Caco-2 (cell line): ENCODE measurements at regions of chr2 and their contacts with region 1.

Region 1: GRCh38 chr2:65227425-65228262 is at the start of gene ACTR2:
- DNase-seq: peak; percentile 98
- H3K4me3 ChIP-seq: peak within 1 kb of the TSS; percentile 84
- H3K4me3 Mint-ChIP-seq: peak within 1 kb of the TSS; percentile 77
- H3K27ac Mint-ChIP-seq: peak within 1 kb of the TSS; percentile 86
- H3K4me1 ChIP-seq: peaks cover 15% of the 10 kb centered on the region
- H3K4me1 Mint-ChIP-seq: peaks cover 22% of the 10 kb centered on the region
- H3K27me3 ChIP-seq: no peaks in the 10 kb centered on the region
- H3K27me3 Mint-ChIP-seq: no peaks in the 10 kb centered on the region
- CTCF ChIP-seq: no peak
- total RNA-seq, gene ACTR2: 248 and 259 TPM in 2 replicates

Region 2: GRCh38 chr2:64586883-64587481 is 640.7 kb before region 1 on chr2:
- CTCF ChIA-PET with region 1: no interaction called
- POLR2A ChIA-PET with region 1: interaction called, 11 read pairs
- intact Hi-C with region 1: no loop called
- DNase-seq: peak in 1 of 2 experiments; percentile 33
- H3K4me3 ChIP-seq: no peak overlapping the region
- H3K4me3 Mint-ChIP-seq: no peak overlapping the region
- H3K27ac Mint-ChIP-seq: no peak overlapping the region
- H3K4me1 ChIP-seq: no peaks in the 10 kb centered on the region
- H3K4me1 Mint-ChIP-seq: no peaks in the 10 kb centered on the region
- H3K27me3 ChIP-seq: no peaks in the 10 kb centered on the region
- H3K27me3 Mint-ChIP-seq: no peaks in the 10 kb centered on the region
- CTCF ChIP-seq: peak; percentile 48 to 63

Region 3: GRCh38 chr2:65056215-65057053 is 171.2 kb before region 1 on chr2 and contains the start of gene CEP68:
- CTCF ChIA-PET with region 1: interaction called, 3 read pairs
- POLR2A ChIA-PET with region 1: interaction called, 40 read pairs
- intact Hi-C with region 1: no loop called
- DNase-seq: peak; percentile 98 to 99
- H3K4me3 ChIP-seq: peak within 1 kb of the TSS; percentile 78
- H3K4me3 Mint-ChIP-seq: peak within 1 kb of the TSS; percentile 99
- H3K27ac Mint-ChIP-seq: peak within 1 kb of the TSS; percentile 42
- H3K4me1 ChIP-seq: peaks cover 22% of the 10 kb centered on the region
- H3K4me1 Mint-ChIP-seq: peaks cover 19% of the 10 kb centered on the region
- H3K27me3 ChIP-seq: no peaks in the 10 kb centered on the region
- H3K27me3 Mint-ChIP-seq: no peaks in the 10 kb centered on the region
- CTCF ChIP-seq: no peak
- total RNA-seq, gene CEP68: 12.9 and 14.0 TPM in 2 replicates

Region 4: DNA sequence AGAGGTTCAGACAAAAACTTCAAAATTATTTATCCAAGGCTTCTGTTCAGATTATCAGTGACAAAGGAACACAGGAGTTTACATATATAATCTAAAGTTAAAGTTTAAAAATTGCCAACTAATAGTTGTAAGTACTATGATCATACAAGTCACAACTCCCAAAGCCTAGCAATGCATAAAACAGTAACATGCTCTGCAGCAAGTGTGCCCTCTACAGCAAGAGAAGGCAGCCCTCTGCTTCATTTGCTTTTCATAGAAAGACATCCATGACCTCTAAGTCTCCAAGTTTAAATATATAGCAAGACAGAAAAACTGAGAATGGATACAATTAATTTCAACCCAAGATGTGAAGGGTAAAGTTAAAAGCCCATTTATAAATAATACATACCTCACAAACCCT is 111.0 kb before region 1 on chr2:
- CTCF ChIA-PET with region 1: no interaction called
- POLR2A ChIA-PET with region 1: interaction called, 10 read pairs
- intact Hi-C with region 1: no loop called
- DNase-seq: no peak
- H3K4me3 ChIP-seq: no peak overlapping the region
- H3K4me3 Mint-ChIP-seq: no peak overlapping the region
- H3K27ac Mint-ChIP-seq: no peak overlapping the region
- H3K4me1 ChIP-seq: no peaks in the 10 kb centered on the region; the same call in 1 of the 2 replicates
- H3K4me1 Mint-ChIP-seq: no peaks in the 10 kb centered on the region
- H3K27me3 ChIP-seq: no peaks in the 10 kb centered on the region
- H3K27me3 Mint-ChIP-seq: no peaks in the 10 kb centered on the region
- CTCF ChIP-seq: no peak

Region 5: GRCh38 chr2:65186872-65187851 is 40.5 kb before region 1 on chr2:
- CTCF ChIA-PET with region 1: interaction called, 5 read pairs
- POLR2A ChIA-PET with region 1: interaction called, 10 read pairs
- intact Hi-C with region 1: no loop called
- DNase-seq: peak; percentile 83 to 90
- H3K4me3 ChIP-seq: no peak overlapping the region
- H3K4me3 Mint-ChIP-seq: no peak overlapping the region
- H3K27ac Mint-ChIP-seq: no peak overlapping the region
- H3K4me1 ChIP-seq: peaks cover 14% of the 10 kb centered on the region
- H3K4me1 Mint-ChIP-seq: peaks cover 14% of the 10 kb centered on the region
- H3K27me3 ChIP-seq: no peaks in the 10 kb centered on the region
- H3K27me3 Mint-ChIP-seq: peaks cover 4% of the 10 kb centered on the region
- CTCF ChIP-seq: peak; percentile 85 to 86

Region 6: DNA sequence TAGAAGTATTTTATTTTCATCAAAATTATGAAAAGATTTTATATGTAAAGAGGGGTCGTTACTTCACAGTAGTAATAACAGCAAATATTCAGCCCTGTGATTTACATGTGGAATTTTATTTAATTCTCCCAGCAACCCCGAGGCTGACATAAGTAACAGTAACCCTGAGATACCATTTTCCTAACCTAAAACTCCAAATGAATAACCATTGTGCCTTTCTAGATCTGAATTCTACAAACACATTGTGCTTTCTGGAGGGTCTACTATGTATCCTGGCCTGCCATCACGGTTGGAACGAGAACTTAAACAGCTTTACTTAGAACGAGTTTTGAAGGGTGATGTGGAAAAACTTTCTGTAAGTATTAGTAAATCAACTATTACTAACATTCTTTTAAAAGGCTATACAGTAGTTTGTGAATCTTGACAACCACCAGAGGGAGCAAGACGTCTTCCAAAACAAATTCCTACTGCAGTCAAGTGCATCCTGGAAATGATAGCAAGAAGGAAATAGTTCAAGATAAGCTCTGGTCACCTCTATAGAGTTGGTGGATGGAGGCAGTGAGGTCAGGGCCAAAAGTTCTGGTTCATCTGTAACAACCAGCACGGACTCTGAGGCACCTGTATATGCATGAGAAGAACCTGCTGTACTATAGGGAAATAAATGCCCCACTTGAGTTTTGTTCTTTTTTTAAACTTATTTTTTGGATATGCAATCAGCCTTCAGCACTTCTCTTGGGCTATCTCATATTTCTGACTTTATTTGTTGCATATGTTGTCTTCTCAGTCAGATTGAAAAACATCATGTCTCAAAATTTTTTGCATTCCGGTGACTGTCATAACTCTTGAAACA is 37.4 kb after region 1 on chr2:
- CTCF ChIA-PET with region 1: no interaction called
- POLR2A ChIA-PET with region 1: interaction called, 10 read pairs
- intact Hi-C with region 1: no loop called
- DNase-seq: peak; percentile 47 to 68
- H3K4me3 ChIP-seq: no peak overlapping the region
- H3K4me3 Mint-ChIP-seq: no peak overlapping the region
- H3K27ac Mint-ChIP-seq: no peak overlapping the region
- H3K4me1 ChIP-seq: no peaks in the 10 kb centered on the region
- H3K4me1 Mint-ChIP-seq: peaks cover 10% of the 10 kb centered on the region
- H3K27me3 ChIP-seq: no peaks in the 10 kb centered on the region
- H3K27me3 Mint-ChIP-seq: no peaks in the 10 kb centered on the region
- CTCF ChIP-seq: peak; percentile 64 to 83

Region 7: DNA sequence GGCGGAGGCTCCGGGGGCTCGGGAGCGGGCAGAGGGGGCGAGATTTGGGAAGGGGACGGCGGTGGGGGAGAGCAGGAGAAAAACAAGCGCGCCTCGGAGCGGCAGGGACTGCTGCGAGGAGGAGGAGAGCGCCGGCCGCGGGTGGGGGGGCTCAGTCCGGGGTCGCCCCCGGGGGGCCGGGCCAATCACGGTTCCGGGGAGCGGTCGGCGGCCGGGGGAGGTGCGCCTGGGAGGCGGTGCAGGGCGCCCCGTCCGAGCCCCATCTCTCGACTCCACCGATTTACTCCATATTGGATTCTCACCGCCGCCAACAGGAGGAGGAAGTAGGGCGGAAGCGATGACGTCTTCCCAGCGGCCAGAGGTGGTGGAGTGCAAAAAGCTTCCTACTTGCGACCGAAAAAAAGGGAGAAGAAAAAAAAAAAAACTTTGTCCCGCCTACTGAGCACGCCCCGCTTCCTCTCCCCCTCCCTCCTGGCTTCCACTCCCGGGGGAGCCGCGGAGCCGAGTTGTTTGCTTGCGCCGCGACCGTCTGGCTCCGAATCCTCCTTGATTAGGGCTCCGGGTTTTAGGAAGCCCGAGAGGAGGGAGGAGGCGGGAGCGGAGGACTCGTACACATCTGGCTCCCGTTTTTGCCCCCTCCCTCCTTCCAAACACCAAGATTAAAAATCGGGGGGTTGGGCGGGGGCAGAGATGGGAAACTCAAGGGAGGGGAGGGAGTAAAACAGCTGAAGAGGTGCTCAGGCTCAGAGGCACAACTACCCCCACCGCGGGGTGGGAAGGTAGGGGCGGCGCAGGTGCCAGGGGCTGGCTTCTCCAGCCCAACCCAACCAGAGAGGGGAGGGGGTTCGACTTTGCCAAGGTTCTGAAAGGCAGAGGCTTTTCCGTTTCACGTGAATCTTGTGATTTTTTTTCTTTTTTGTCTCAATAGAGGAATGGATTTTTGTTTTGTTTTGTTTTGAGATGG is 204.9 kb after region 1 on chr2 and contains the start of gene SPRED2:
- CTCF ChIA-PET with region 1: no interaction called
- POLR2A ChIA-PET with region 1: interaction called, 11 read pairs
- intact Hi-C with region 1: no loop called
- DNase-seq: peak; percentile 95
- H3K4me3 ChIP-seq: peak within 1 kb of the TSS; percentile 80
- H3K4me3 Mint-ChIP-seq: peak within 1 kb of the TSS; percentile 78
- H3K27ac Mint-ChIP-seq: peak within 1 kb of the TSS; percentile 84
- H3K4me1 ChIP-seq: peaks cover 10% of the 10 kb centered on the region
- H3K4me1 Mint-ChIP-seq: peaks cover 7% of the 10 kb centered on the region
- H3K27me3 ChIP-seq: no peaks in the 10 kb centered on the region
- H3K27me3 Mint-ChIP-seq: no peaks in the 10 kb centered on the region
- CTCF ChIP-seq: peak in 1 of 2 experiments; percentile 16
- total RNA-seq, gene SPRED2: 49.9 and 55.3 TPM in 2 replicates

Region 8: DNA sequence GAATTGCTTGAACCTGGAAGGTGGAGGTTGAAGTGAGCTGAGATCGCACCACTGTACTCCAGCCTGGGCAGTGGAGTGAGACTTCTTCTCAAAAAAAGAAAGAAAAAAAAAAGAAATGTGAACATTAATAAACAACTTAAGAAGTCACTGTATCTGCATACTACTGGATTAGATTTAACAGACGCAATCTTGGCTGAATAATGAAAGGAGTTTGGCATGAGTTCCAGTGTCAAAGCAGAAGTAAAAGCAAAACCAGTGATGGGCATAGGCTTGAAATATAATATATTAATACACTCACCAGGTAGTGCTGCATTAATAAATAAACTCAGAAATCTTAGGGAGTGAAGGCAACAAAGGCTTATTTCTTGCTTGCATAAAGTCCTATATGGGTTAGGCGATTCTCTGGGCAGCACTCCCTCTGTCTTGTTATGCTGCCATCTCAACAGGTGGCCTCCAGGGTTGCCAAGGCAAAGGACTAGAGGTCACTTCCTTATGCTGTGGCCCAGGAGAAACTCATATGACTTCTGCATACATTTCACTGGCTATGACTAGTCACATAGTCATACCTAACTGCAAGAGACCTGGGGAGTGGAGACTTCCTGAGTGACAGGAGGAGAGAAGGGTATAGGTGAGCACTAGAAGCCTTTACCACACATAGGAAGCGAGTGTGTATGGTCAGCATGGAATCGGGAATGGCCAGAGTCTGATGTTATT is 501.0 kb after region 1 on chr2:
- CTCF ChIA-PET with region 1: no interaction called
- POLR2A ChIA-PET with region 1: no interaction called
- intact Hi-C with region 1: no loop called
- DNase-seq: no peak
- H3K4me3 ChIP-seq: no peak overlapping the region
- H3K4me3 Mint-ChIP-seq: no peak overlapping the region
- H3K27ac Mint-ChIP-seq: no peak overlapping the region
- H3K4me1 ChIP-seq: no peaks in the 10 kb centered on the region
- H3K4me1 Mint-ChIP-seq: no peaks in the 10 kb centered on the region
- H3K27me3 ChIP-seq: no peaks in the 10 kb centered on the region; the same call in 1 of the 2 replicates
- H3K27me3 Mint-ChIP-seq: no peaks in the 10 kb centered on the region
- CTCF ChIP-seq: no peak